B cell (primary cell): ENCODE measurements at regions of chr2 and their contacts with region 1.

Region 1: DNA sequence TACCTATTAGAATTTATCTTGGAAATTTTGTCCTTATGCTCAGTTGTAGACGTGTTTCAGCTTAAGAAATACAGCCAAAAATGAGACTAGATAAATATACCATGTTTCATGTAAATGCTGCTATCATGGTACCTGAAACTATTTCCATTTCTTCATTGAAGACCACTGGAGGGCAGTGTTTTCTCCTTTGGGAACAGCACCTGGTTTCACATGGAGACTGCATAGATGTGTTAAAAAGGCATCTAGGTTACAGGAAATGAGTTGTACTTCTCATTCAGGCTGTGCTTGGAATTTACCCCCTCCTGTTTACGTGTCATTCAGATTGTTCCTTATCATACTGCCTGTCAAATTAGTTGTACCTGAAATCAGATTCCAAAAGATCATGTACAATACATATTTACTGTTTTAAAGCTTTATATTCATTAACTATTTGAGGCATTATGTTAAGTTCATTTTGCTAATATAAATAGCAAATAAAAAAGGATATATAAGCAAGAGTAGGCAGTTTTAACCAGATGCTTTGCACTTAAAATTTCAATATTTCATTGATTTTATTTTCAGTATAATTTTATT is 57.3 kb upstream of the PSMD14 start:
- DNase-seq: peak; percentile 47
- ATAC-seq: peak; percentile 53
- H3K4me3 ChIP-seq: no peak overlapping the region
- H3K4me3 Mint-ChIP-seq: no peak overlapping the region
- H3K27ac ChIP-seq: no peak overlapping the region
- H3K27ac Mint-ChIP-seq: no peak overlapping the region
- H3K4me1 ChIP-seq: peaks cover 0 to 3% of the 10 kb centered on the region in 2 donors
- H3K4me1 Mint-ChIP-seq: peaks cover 29% of the 10 kb centered on the region
- H3K27me3 ChIP-seq: no peaks in the 10 kb centered on the region
- H3K27me3 Mint-ChIP-seq: peaks cover 10% of the 10 kb centered on the region
- CTCF ChIP-seq: peak; percentile 67

Region 2: GRCh38 chr2:161223139-161223732 is 27.7 kb before region 1 on chr2:
- CTCF ChIA-PET with region 1: interaction called, 15 read pairs
- POLR2A ChIA-PET with region 1: no interaction called
- intact Hi-C with region 1: no loop called
- DNase-seq: peak; percentile 62
- ATAC-seq: peak; percentile 66
- H3K4me3 ChIP-seq: no peak overlapping the region
- H3K4me3 Mint-ChIP-seq: no peak overlapping the region
- H3K27ac ChIP-seq: no peak overlapping the region
- H3K27ac Mint-ChIP-seq: no peak overlapping the region
- H3K4me1 ChIP-seq: no peaks in the 10 kb centered on the region
- H3K4me1 Mint-ChIP-seq: no peaks in the 10 kb centered on the region
- H3K27me3 ChIP-seq: no peaks in the 10 kb centered on the region
- H3K27me3 Mint-ChIP-seq: no peaks in the 10 kb centered on the region
- CTCF ChIP-seq: peak; percentile 91